Gastrocnemius medialis (tissue), 4 donors: ENCODE measurements at regions of chr2 and their contacts with region 1.

Region 1: GRCh38 chr2:15636972-15637785 is 45.5 kb downstream of the DDX1 start:
- DNase-seq: peak; percentile 28 to 39
- ATAC-seq: peak; percentile 89 to 90
- H3K4me3 ChIP-seq: no peak overlapping the region
- H3K27ac ChIP-seq: peak overlapping the region in 1 of 4 donors; percentile 10
- H3K4me1 ChIP-seq: peaks cover 7 to 20% of the 10 kb centered on the region in 2 donors
- H3K27me3 ChIP-seq: no peaks in the 10 kb centered on the region
- CTCF ChIP-seq: peak; percentile 76 to 83 (median 78)
- POLR2A ChIP-seq: no peak

Region 2: GRCh38 chr2:15284614-15285013 is 352.6 kb before region 1 on chr2:
- in situ Hi-C with region 1: no loop called
- intact Hi-C with region 1: no loop called
- DNase-seq: no peak
- ATAC-seq: no peak
- H3K4me3 ChIP-seq: no peak overlapping the region
- H3K27ac ChIP-seq: no peak overlapping the region
- H3K4me1 ChIP-seq: no peaks in the 10 kb centered on the region
- H3K27me3 ChIP-seq: no peaks in the 10 kb centered on the region
- CTCF ChIP-seq: no peak
- POLR2A ChIP-seq: no peak

Region 3: GRCh38 chr2:15939854-15940660 is 302.9 kb after region 1 on chr2 and contains the start of gene MYCN:
- in situ Hi-C with region 1: loop called in 1 of 4 experiments (anchors 25 kb)
- intact Hi-C with region 1: loop called (anchors 10 kb)
- DNase-seq: peak; percentile 27 to 32
- ATAC-seq: peak; percentile 25 to 65
- H3K4me3 ChIP-seq: peak within 1 kb of the TSS; percentile 52 to 57 (median 56)
- H3K27ac ChIP-seq: no peak within 1 kb of the TSS
- H3K4me1 ChIP-seq: peaks cover 23 to 43% of the 10 kb centered on the region in 2 donors
- H3K27me3 ChIP-seq: peaks cover 21 to 36% (median 27%) of the 10 kb centered on the region in 3 donors
- CTCF ChIP-seq: peak; percentile 42 to 73 (median 52)
- POLR2A ChIP-seq: no peak
- total RNA-seq, gene MYCN: 0.17 to 0.25 TPM in 2 of 4 donors, not detected in the others

Region 4: DNA sequence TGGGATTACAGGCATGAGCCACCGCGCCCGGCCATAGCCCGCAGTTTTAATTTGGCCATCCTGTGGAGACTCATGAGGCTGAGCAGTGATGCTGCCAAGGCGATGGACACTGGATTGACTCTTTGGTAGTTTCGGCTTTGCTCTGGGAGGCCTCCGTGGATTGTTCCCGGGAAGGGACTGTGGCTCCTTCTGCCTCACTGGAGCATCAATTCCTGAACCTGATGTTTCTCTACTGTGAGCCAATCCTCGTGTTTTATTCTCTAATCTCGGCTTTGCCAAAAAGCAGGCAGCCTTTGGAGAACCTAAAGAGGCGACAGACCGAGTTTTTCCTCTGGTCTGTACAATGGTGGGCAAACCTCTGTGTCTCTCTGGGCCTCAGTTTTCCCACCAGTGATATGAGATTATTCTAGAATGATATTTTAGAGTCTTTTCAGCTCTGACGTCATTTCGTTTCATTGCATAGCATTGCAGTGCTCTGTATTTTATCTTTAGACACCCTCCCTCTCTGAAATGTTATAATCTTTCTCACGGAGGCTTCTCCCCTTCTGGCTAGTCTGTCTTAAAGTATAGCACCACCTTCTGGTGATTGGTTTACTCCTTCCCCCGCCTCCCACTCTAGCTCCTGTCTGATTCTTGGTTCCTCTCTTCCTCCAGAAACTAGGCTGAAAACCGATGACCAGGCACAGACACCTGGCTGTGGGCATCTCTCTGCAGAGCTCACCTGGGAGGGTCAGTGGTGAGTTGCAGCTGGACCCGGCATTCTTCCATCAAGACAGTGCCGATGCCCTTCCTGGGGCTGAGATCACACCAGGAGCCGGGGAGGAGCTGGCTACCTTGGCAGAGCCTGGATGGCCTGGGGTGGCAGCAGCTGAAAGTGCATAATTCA is 644.5 kb after region 1 on chr2:
- in situ Hi-C with region 1: loop called (anchors 10 to 25 kb)
- intact Hi-C with region 1: loop called (anchors 2 kb)
- DNase-seq: no peak
- ATAC-seq: peak in 1 of 2 donors; percentile 39
- H3K4me3 ChIP-seq: no peak overlapping the region
- H3K27ac ChIP-seq: no peak overlapping the region
- H3K4me1 ChIP-seq: no peaks in the 10 kb centered on the region
- H3K27me3 ChIP-seq: no peaks in the 10 kb centered on the region
- CTCF ChIP-seq: peak in 2 of 5 experiments; percentile 43 to 54
- POLR2A ChIP-seq: no peak

Region 5: DNA sequence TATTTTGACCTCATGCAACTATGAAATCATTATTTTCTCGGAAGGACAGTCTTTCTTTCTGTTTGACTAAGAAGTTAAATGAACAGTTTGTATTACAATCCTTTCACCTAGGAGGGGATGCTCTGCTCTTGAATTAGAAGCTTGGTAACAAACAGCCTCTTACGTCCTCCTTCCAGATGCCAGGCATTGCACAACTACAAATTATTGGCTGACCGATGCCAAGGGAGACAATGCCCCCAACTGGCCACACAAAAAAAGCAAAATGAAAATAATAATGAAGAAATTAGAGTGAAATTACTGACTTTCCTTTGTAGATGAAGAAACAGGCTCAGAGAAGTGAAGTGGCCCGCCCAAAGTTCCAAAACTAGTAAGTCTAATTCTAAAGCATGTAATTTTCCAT is 850.5 kb after region 1 on chr2:
- in situ Hi-C with region 1: loop called in 1 of 4 experiments (anchors 10 kb)
- intact Hi-C with region 1: no loop called
- DNase-seq: no peak
- ATAC-seq: no peak
- H3K4me3 ChIP-seq: no peak overlapping the region
- H3K27ac ChIP-seq: no peak overlapping the region
- H3K4me1 ChIP-seq: no peaks in the 10 kb centered on the region
- H3K27me3 ChIP-seq: no peaks in the 10 kb centered on the region
- CTCF ChIP-seq: peak in 1 of 5 experiments; percentile 15
- POLR2A ChIP-seq: no peak

Region 6: DNA sequence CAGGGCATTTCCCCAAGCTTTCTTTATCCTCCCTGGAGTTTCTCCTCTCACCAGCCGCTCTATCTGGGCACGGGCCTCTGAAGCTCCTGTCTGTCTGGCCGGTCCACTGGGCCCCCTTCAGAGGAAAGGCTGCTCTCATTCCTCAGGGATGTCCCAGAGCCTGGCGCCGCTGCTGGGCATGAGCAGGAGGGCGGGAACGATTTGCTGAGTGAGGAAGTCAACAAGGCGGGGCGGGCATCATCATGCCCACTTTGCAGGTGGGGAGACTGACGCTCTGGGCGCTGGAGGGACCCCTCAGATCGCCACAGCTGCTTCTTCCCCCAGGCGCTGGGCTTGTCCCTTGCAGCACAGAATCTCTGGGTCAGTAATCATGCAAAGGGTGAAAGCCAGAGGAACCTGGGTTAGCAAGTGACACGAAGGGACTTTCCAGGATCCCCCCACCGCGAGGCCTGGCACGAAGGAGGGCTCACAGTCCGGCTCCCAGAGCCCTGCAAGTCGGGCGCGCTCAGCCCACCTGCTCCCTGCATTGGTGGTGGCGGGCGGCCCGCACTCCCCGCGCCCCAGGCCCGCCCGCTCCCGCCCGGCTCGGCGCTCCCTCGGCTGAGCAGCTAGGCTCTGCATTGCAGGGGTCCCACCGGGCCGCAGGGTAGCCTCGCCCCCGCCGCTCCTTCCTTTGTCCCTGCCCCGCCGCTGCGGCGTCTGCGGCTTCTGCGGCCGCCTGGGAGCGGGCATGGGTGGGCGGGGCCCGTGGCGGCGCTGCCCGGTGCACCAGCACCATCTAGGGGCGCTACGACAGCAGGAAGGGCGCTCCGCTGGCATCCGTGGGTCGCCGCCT is 870.7 kb after region 1 on chr2:
- in situ Hi-C with region 1: loop called (anchors 10 to 25 kb)
- intact Hi-C with region 1: loop called (anchors 1 kb)
- DNase-seq: peak in 1 of 2 donors; percentile 12
- ATAC-seq: peak in 1 of 2 donors; percentile 55
- H3K4me3 ChIP-seq: peak overlapping the region; percentile 0 to 52 (median 43)
- H3K27ac ChIP-seq: no peak overlapping the region
- H3K4me1 ChIP-seq: no peaks in the 10 kb centered on the region
- H3K27me3 ChIP-seq: peaks cover 3 to 21% (median 6%) of the 10 kb centered on the region in 3 donors
- CTCF ChIP-seq: peak; percentile 33 to 74 (median 49)
- POLR2A ChIP-seq: no peak

Region 7: GRCh38 chr2:16513626-16514025 is 876.4 kb after region 1 on chr2:
- in situ Hi-C with region 1: loop called (anchors 10 to 25 kb)
- intact Hi-C with region 1: loop called (anchors 1 kb)
- DNase-seq: no peak
- ATAC-seq: no peak
- H3K4me3 ChIP-seq: no peak overlapping the region
- H3K27ac ChIP-seq: no peak overlapping the region
- H3K4me1 ChIP-seq: no peaks in the 10 kb centered on the region
- H3K27me3 ChIP-seq: peaks cover 0 to 5% (median 0%) of the 10 kb centered on the region in 3 donors
- CTCF ChIP-seq: no peak
- POLR2A ChIP-seq: no peak

Region 8: GRCh38 chr2:16608661-16609643 is 971.8 kb after region 1 on chr2:
- in situ Hi-C with region 1: loop called in 3 of 4 experiments (anchors 25 kb)
- intact Hi-C with region 1: loop called (anchors 1 kb)
- DNase-seq: peak; percentile 61 to 75
- ATAC-seq: peak; percentile 80 to 88
- H3K4me3 ChIP-seq: peak overlapping the region; percentile 34 to 60 (median 46)
- H3K27ac ChIP-seq: peak overlapping the region in 2 of 4 donors; percentile 15 to 46
- H3K4me1 ChIP-seq: peaks cover 8 to 16% of the 10 kb centered on the region in 2 donors
- H3K27me3 ChIP-seq: no peaks in the 10 kb centered on the region
- CTCF ChIP-seq: peak; percentile 87 to 94 (median 93)
- POLR2A ChIP-seq: no peak